Dendritic cell treated with granulocyte-macrophage colony-stimulating factor and Interleukin-4, amounts not matched to agents 40 ng/mL and 50 ng/mL, for 4 days (primary cell): ENCODE measurements at regions of chr2 and their contacts with region 1.

Region 1: DNA sequence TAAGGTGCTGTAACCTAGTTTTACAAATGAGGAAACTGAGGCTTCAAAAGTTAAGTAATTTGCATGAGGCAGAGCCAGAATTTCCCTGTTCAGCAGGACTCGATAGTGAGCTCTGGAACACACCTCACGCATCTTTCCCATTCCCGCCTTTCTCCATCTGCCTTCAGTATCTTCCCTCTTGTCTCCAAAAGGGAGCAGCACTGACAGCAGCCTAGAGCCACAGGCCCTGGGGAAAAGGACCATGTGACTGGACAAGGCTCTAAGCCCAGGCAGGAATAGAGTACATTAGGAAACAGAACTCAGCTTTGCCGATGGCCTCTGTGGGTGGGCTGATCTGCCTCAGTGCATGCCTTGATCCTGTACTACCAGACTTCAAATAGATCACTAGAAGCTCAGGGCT is 21.5 kb downstream of the GPR155 start:
- H3K4me3 Mint-ChIP-seq: no peak overlapping the region
- H3K27ac Mint-ChIP-seq: no peak overlapping the region
- H3K4me1 Mint-ChIP-seq: no peaks in the 10 kb centered on the region
- H3K27me3 Mint-ChIP-seq: peaks cover 2% of the 10 kb centered on the region

Region 2: DNA sequence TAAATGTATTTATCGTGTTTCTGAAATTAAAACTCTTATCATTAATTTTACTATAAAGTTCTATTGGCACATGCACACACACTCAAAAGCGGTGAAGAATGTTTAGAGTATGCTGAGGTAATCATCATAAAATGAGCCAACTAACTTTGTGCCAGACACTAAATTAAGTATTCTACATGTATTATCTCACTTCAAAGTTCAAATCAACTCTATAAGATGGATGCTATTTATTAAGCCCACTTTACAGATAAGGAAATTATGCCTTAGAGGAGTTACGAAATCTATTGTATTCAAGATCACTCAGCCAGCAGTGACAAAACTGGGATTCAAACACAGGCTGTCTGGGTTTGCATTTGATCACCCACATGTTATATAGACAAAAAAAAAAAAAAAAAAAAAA is 241.9 kb before region 1 on chr2:
- intact Hi-C with region 1: no loop called
- H3K4me3 Mint-ChIP-seq: no peak overlapping the region
- H3K27ac Mint-ChIP-seq: no peak overlapping the region
- H3K4me1 Mint-ChIP-seq: no peaks in the 10 kb centered on the region
- H3K27me3 Mint-ChIP-seq: no peaks in the 10 kb centered on the region

Region 3: DNA sequence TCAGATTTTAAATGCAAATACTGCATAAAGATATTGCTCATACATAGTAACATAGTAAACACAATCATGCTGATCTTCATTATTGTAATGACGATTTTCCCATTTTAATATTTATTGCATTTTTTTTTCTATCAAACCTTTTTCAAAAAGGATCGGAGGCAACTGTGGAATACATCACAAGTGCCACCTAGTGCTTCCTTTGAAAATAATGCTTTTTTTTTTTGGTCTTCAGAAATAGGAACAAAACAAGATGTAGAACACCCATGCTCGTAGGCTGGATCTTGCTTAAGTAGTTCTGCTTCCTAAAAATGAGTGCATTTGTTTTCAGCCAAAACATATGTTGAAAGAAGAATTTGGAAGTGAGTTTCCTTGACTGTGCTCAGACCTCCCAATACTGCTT is 57.2 kb after region 1 on chr2:
- intact Hi-C with region 1: loop called (anchors 1 kb)
- H3K4me3 Mint-ChIP-seq: no peak overlapping the region
- H3K27ac Mint-ChIP-seq: peak overlapping the region; percentile 79
- H3K4me1 Mint-ChIP-seq: peaks cover 24% of the 10 kb centered on the region
- H3K27me3 Mint-ChIP-seq: peaks cover 9% of the 10 kb centered on the region

Region 4: GRCh38 chr2:174546581-174547506 is 81.5 kb after region 1 on chr2:
- intact Hi-C with region 1: loop called (anchors 1 kb)
- H3K4me3 Mint-ChIP-seq: no peak overlapping the region
- H3K27ac Mint-ChIP-seq: no peak overlapping the region
- H3K4me1 Mint-ChIP-seq: peaks cover 6% of the 10 kb centered on the region
- H3K27me3 Mint-ChIP-seq: peaks cover 16% of the 10 kb centered on the region

Region 5: DNA sequence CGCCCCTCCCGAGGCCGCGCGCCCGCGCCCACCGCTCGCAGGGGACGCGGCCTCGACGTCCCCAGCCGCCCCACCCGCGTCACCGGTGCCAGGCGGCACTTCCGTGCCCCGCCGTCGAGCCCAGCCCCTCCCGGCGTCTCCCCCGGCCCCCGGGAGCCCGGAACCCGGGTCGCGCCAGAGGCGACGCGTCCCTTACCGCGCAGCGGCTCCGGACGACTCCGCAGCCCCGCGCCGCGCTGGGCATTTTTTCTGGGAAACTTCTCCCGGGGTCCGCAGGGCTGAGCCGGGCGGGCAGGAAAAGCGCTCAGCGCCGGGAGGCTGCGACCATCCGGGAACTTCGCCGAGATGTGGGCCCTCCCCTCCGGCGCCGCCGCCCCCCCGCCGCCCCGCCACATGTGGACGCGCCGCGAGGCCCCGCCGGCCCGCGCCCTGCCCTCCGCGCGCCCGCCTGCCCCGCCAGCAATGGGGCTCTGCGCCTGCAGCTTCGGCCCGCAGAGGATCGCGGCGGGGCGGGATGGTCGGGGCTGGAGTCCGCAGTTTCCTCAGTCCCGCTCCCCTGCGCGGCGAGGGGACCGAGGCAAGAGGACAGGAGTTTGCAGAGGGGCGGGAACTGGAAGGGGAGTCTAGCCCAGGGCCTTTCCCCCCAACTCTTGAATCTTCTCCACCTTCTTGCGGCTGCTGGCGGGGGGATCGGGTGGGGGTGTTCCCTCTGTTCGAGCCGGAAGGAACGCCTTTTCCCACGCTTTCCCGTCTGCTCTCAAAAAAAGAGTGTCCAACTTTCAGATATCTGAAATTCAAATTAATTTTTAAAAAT is 217.5 kb after region 1 on chr2:
- intact Hi-C with region 1: loop called (anchors 2 kb)
- H3K4me3 Mint-ChIP-seq: peak overlapping the region; percentile 78
- H3K27ac Mint-ChIP-seq: peak overlapping the region; percentile 82
- H3K4me1 Mint-ChIP-seq: peaks cover 70% of the 10 kb centered on the region
- H3K27me3 Mint-ChIP-seq: peaks cover 4% of the 10 kb centered on the region